ENCODE measurements at regions of chr5 and their contacts with region 1.

Region 1: GRCh38 chr5:64612344-64612961 is 77.8 kb upstream of the SHISAL2B start:
- DNase-seq: no peak
- ATAC-seq: peak; percentile 80

Region 2: DNA sequence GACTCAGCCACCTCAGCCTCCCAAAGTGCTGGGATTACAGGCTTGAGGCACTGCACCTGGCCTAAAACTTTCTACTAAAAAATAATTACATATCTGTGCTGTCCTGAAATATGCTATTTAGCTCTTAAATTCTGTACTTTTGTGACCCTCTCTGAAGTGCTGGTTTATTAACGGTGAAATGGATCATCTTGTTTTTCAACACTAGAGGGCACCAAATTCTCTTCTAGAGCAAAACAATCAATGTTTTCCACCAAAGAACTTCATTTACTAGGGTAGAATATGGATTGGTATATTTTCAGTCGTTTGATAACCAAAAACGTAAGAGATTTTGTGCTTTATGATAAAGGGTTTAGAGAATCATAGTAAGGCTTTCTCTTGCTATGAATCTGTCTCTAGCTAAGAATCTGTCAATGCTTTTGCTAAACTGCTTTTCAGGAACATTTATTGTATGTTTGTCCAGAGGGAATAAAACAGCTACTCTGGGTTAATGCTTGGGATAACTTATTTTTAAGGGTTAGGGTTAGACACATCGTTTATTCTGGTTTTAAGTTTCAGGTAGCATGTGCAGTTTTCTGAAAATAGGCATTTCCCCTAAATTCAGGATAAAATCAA is 383.2 kb before region 1 on chr5:
- intact Hi-C with region 1: loop called (anchors 5 kb)
- DNase-seq: no peak
- ATAC-seq: peak; percentile 43

Region 3: GRCh38 chr5:64397552-64397951 is 214.9 kb before region 1 on chr5:
- intact Hi-C with region 1: no loop called
- DNase-seq: no peak
- ATAC-seq: no peak

Measured in Right ventricle myocardium superior (tissue), 1 donor.